AG04449 (cell line): ENCODE measurements at regions of chr11 and their contacts with region 1.

Region 1: GRCh38 chr11:67167086-67167485 is 48.0 kb downstream of the KDM2A start:
- DNase-seq: no peak
- H3K4me3 ChIP-seq: no peak overlapping the region
- CTCF ChIP-seq: no peak

Region 2: GRCh38 chr11:67146516-67147226 is 20.4 kb before region 1 on chr11:
- CTCF ChIA-PET with region 1: interaction called, 18 read pairs
- POLR2A ChIA-PET with region 1: no interaction called
- DNase-seq: no peak
- H3K4me3 ChIP-seq: no peak overlapping the region
- CTCF ChIP-seq: no peak

Region 3: DNA sequence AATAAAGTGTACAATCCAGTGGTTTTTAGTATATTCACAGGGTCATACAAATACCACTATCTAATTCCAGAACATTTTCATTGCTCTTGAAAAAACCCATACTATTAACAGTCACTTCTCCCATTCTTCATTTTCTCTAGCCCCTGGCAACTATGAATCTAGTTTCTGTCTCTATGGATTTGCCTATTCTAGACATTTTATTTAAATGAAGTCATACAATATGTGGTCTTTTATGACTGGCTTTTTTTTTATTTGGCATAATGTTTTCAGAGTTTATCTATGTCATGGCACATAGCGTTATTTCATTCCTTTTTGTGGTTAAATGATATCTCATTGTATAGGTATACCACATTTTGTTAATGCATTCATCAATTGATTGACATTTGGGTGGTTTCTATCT is 11.3 kb after region 1 on chr11:
- CTCF ChIA-PET with region 1: interaction called, 12 read pairs
- POLR2A ChIA-PET with region 1: no interaction called
- DNase-seq: no peak
- H3K4me3 ChIP-seq: no peak overlapping the region
- CTCF ChIP-seq: no peak

Region 4: GRCh38 chr11:67195971-67196456 is 28.9 kb after region 1 on chr11:
- CTCF ChIA-PET with region 1: interaction called, 10 read pairs
- POLR2A ChIA-PET with region 1: interaction called, 3 read pairs
- DNase-seq: peak; percentile 73
- H3K4me3 ChIP-seq: no peak overlapping the region
- CTCF ChIP-seq: peak; percentile 33

Region 5: DNA sequence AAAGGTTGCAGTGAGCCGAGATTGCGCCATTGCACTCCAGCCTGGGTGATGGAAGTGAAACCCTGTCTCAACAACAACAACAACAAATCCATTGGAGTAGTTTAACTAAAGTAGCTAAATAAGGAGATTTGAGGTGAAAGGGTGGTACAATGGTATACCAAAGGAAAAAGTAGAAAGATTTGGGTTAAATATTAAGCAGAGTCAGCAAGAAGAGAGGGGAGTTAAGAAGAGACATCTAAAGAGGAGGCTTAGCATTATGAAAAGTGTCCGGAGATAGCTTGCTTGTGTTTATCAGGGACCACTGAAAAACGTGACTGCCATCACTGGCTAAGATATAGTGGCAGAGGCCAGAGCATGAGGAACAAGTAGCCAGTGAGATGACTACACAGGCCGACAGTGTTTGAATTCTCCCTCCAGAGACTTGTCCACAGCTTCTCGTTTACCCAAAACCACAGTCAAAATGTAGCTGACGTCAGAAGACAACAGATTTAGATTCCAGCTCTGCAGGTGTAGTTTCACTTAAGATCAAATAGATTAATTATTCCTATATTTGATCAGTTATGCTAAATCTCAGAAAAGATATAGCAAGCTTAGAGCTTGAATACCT is 66.6 kb after region 1 on chr11:
- CTCF ChIA-PET with region 1: no interaction called
- POLR2A ChIA-PET with region 1: no interaction called
- DNase-seq: no peak
- H3K4me3 ChIP-seq: no peak overlapping the region
- CTCF ChIP-seq: no peak

Region 6: GRCh38 chr11:67516806-67517205 is 349.7 kb after region 1 on chr11:
- CTCF ChIA-PET with region 1: no interaction called
- POLR2A ChIA-PET with region 1: no interaction called
- DNase-seq: no peak
- H3K4me3 ChIP-seq: no peak overlapping the region
- CTCF ChIP-seq: no peak